Heart left ventricle (tissue), 16 donors: ENCODE measurements at regions of chr15 and their contacts with region 1.

Region 1: GRCh38 chr15:91302588-91303439 is 202.8 kb downstream of the SV2B start:
- DNase-seq: peak in 4 of 5 donors; percentile 32 to 50 (median 38)
- ATAC-seq: peak; percentile 67 to 89 (median 82)
- H3K4me3 ChIP-seq: no peak overlapping the region
- H3K27ac ChIP-seq: no peak overlapping the region
- H3K4me1 ChIP-seq: peaks cover 0 to 27% (median 9%) of the 10 kb centered on the region in 12 donors
- H3K27me3 ChIP-seq: peaks cover 0 to 9% (median 0%) of the 10 kb centered on the region in 9 donors
- CTCF ChIP-seq: peak; percentile 64 to 84 (median 74)
- POLR2A ChIP-seq: no peak

Region 2: GRCh38 chr15:91522663-91523332 is 220.0 kb after region 1 on chr15:
- intact Hi-C with region 1: loop called (anchors 1 to 5 kb)
- DNase-seq: no peak
- ATAC-seq: peak in 3 of 4 donors; percentile 41 to 64 (median 53)
- H3K4me3 ChIP-seq: no peak overlapping the region
- H3K27ac ChIP-seq: no peak overlapping the region
- H3K4me1 ChIP-seq: peaks cover 0 to 12% (median 0%) of the 10 kb centered on the region in 12 donors
- H3K27me3 ChIP-seq: no peaks in the 10 kb centered on the region
- CTCF ChIP-seq: peak in 11 of 12 donors; percentile 7 to 69 (median 34)
- POLR2A ChIP-seq: no peak

Region 3: DNA sequence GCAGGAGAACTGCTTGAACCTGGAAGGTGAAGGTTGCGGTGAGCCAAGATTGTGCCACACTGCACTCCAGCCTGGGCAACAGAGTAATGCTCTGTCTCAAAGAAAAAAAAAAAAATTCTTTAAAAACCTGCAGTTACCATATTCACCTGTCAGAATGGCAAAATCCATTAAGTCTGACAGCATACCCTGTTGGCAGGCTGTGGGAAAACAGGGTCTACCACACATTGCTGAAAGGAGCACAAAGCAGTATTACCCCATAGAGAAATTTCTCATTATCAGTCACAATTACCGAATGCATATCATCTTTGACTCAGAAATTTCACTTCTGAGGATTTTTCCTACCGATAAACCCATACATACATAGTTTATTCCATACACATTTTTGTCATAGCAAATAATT is 286.5 kb after region 1 on chr15:
- intact Hi-C with region 1: no loop called
- DNase-seq: no peak
- ATAC-seq: no peak
- H3K4me3 ChIP-seq: no peak overlapping the region
- H3K27ac ChIP-seq: no peak overlapping the region
- H3K4me1 ChIP-seq: no peaks in the 10 kb centered on the region
- H3K27me3 ChIP-seq: no peaks in the 10 kb centered on the region
- CTCF ChIP-seq: no peak
- POLR2A ChIP-seq: no peak

Region 4: GRCh38 chr15:91627473-91628278 is 324.9 kb after region 1 on chr15:
- intact Hi-C with region 1: loop called in 1 of 10 experiments (anchors 10 kb)
- DNase-seq: peak; percentile 40 to 77 (median 68)
- ATAC-seq: peak; percentile 87 to 94 (median 92)
- H3K4me3 ChIP-seq: no peak overlapping the region
- H3K27ac ChIP-seq: peak overlapping the region; percentile 39 to 77 (median 69)
- H3K4me1 ChIP-seq: peaks cover 0 to 23% (median 12%) of the 10 kb centered on the region in 12 donors
- H3K27me3 ChIP-seq: no peaks in the 10 kb centered on the region
- CTCF ChIP-seq: no peak
- POLR2A ChIP-seq: no peak

Region 5: GRCh38 chr15:91706322-91707032 is 403.7 kb after region 1 on chr15:
- intact Hi-C with region 1: loop called in 4 of 10 experiments (anchors 5 to 10 kb)
- DNase-seq: peak; percentile 74 to 81 (median 75)
- ATAC-seq: peak; percentile 53 to 92 (median 89)
- H3K4me3 ChIP-seq: peak overlapping the region in 3 of 12 donors; percentile 3 to 28 (median 13)
- H3K27ac ChIP-seq: peak overlapping the region in 5 of 12 donors; percentile 2 to 81 (median 33)
- H3K4me1 ChIP-seq: peaks cover 0 to 26% (median 1%) of the 10 kb centered on the region in 12 donors
- H3K27me3 ChIP-seq: no peaks in the 10 kb centered on the region
- CTCF ChIP-seq: peak; percentile 80 to 94 (median 90)
- POLR2A ChIP-seq: no peak

Region 6: GRCh38 chr15:92226014-92226612 is 923.3 kb after region 1 on chr15:
- intact Hi-C with region 1: loop called in 1 of 10 experiments (anchors 10 kb)
- DNase-seq: no peak
- ATAC-seq: peak in 3 of 4 donors; percentile 75 to 84 (median 76)
- H3K4me3 ChIP-seq: no peak overlapping the region
- H3K27ac ChIP-seq: no peak overlapping the region
- H3K4me1 ChIP-seq: no peaks in the 10 kb centered on the region
- H3K27me3 ChIP-seq: no peaks in the 10 kb centered on the region
- CTCF ChIP-seq: peak; percentile 26 to 60 (median 47)
- POLR2A ChIP-seq: no peak